OCI-LY7 (cell line): ENCODE measurements at regions of chr3 and their contacts with region 1.

Region 1: GRCh38 chr3:32684800-32685542 is at the start of gene CNOT10:
- DNase-seq: peak; percentile 98
- H3K4me3 ChIP-seq: peak within 1 kb of the TSS; percentile 97
- H3K27ac ChIP-seq: peak within 1 kb of the TSS; percentile 60
- H3K4me1 ChIP-seq: peaks cover 22% of the 10 kb centered on the region
- CTCF ChIP-seq: 0 out of 2 replicates have a peak, but pooled peaks have one; percentile 7
- total RNA-seq, gene CNOT10: 50.2 and 56.1 TPM in 2 replicates

Region 2: DNA sequence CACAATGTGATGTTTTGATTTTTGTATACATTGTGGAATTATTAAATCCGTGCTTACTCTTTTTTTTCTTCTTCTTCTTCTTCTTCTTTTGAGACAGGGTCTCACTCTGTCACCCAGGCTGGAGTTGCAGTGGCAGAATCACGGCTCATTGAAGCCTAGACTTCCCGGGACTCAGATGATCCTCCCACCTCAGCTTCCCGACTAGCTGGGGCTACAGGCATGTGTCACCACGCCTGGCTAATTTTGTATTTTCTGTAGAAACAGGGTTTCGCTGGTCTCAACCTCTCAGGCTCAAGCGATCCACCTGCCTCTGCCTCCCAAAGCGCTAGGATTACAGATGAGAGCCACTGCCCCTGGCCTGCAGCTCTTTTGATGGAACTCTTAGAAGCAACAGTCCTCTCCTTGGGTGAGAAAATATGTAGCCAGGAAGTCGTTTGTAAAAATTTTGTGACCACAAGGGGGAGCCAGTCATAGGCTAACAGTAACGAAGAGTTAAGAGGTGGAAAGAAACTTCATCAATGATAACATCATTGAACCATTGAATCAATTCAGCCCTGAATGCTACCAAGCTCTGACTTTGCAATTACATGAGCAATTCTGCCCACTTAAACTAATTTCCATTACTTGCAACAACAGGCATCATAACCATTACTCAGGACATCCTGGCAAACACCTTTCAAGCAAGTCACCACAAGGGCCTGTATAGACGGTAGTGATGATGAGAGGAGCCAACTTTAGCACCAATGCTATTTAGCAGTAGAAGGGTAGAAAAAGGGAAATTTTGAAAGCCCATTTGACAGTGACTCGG is 310.0 kb before region 1 on chr3:
- CTCF ChIA-PET with region 1: no interaction called
- POLR2A ChIA-PET with region 1: no interaction called
- intact Hi-C with region 1: loop called (anchors 10 kb)
- DNase-seq: peak; percentile 82
- H3K4me3 ChIP-seq: no peak overlapping the region
- H3K27ac ChIP-seq: no peak overlapping the region
- H3K4me1 ChIP-seq: peaks cover 10% of the 10 kb centered on the region
- CTCF ChIP-seq: peak; percentile 91

Region 3: GRCh38 chr3:32662647-32663046 is 22.3 kb before region 1 on chr3:
- CTCF ChIA-PET with region 1: no interaction called
- POLR2A ChIA-PET with region 1: no interaction called
- intact Hi-C with region 1: no loop called
- DNase-seq: no peak
- H3K4me3 ChIP-seq: no peak overlapping the region
- H3K27ac ChIP-seq: no peak overlapping the region
- H3K4me1 ChIP-seq: no peaks in the 10 kb centered on the region
- CTCF ChIP-seq: no peak